ENCODE measurements at regions of chr6 and their contacts with region 1.

Region 1: DNA sequence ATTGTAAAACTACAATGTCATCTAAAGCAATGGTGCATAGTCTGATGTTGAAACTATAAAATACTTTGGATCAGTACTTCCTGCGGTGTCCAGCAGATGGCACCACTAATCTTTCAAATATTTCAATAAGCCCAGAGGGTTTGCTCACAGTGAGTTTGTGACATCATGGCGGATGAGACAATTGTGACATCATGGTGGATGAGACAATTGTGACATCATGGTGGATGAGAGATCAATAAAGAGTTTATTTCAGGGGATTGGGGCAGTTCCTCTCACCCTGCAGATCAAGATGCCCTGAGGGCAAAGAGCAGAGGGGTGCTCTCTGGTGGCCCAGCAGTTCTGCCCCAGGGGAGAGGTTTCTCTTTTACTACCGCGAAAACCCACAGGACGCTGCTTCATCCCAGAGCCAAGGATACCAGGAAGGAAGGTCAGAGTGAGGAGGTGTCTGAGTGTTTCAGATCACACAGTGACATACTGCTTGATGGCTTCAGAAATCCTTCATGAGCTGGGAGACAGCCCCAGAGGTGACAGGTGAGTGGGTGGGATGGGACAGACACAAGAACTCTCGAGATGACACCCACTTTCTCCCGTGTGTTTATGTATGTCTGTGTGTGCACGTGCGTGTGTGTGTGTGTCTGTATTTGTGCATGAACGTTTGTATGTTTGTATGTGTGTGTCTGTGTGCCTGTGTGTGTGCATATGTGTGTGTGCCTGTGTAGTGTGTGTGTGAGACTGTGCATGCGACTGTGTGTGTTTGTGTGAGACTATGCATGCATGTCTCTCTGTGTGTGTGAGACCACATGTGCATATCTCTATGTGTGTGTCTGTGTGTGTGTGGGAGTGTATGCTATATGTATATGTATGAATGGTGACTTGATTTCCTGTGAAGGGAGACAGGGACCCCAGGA is 7.3 kb upstream of the ULBP2 start:
- DNase-seq: peak; percentile 86
- ATAC-seq: peak; percentile 44
- H3K4me3 ChIP-seq: no peak overlapping the region
- H3K4me3 Mint-ChIP-seq: no peak overlapping the region
- H3K27ac ChIP-seq: no peak overlapping the region
- H3K27ac Mint-ChIP-seq: no peak overlapping the region
- H3K4me1 ChIP-seq: peaks cover 16 to 24% of the 10 kb centered on the region in 2 donors
- H3K4me1 Mint-ChIP-seq: peaks cover 19% of the 10 kb centered on the region
- H3K27me3 ChIP-seq: peaks cover 2 to 72% (median 64%) of the 10 kb centered on the region in 4 experiments
- H3K27me3 Mint-ChIP-seq: peaks cover 80% of the 10 kb centered on the region
- CTCF ChIP-seq: peak; percentile 84

Region 2: GRCh38 chr6:149834513-149835481 is 99.7 kb before region 1 on chr6:
- CTCF ChIA-PET with region 1: no interaction called
- POLR2A ChIA-PET with region 1: no interaction called
- intact Hi-C with region 1: loop called (anchors 2 kb)
- DNase-seq: peak; percentile 78
- ATAC-seq: peak; percentile 70
- H3K4me3 ChIP-seq: no peak overlapping the region
- H3K4me3 Mint-ChIP-seq: no peak overlapping the region
- H3K27ac ChIP-seq: no peak overlapping the region
- H3K27ac Mint-ChIP-seq: no peak overlapping the region
- H3K4me1 ChIP-seq: no peaks in the 10 kb centered on the region
- H3K4me1 Mint-ChIP-seq: no peaks in the 10 kb centered on the region
- H3K27me3 ChIP-seq: peaks cover 0 to 8% (median 0%) of the 10 kb centered on the region in 4 experiments
- H3K27me3 Mint-ChIP-seq: peaks cover 21% of the 10 kb centered on the region
- CTCF ChIP-seq: peak; percentile 94

Region 3: DNA sequence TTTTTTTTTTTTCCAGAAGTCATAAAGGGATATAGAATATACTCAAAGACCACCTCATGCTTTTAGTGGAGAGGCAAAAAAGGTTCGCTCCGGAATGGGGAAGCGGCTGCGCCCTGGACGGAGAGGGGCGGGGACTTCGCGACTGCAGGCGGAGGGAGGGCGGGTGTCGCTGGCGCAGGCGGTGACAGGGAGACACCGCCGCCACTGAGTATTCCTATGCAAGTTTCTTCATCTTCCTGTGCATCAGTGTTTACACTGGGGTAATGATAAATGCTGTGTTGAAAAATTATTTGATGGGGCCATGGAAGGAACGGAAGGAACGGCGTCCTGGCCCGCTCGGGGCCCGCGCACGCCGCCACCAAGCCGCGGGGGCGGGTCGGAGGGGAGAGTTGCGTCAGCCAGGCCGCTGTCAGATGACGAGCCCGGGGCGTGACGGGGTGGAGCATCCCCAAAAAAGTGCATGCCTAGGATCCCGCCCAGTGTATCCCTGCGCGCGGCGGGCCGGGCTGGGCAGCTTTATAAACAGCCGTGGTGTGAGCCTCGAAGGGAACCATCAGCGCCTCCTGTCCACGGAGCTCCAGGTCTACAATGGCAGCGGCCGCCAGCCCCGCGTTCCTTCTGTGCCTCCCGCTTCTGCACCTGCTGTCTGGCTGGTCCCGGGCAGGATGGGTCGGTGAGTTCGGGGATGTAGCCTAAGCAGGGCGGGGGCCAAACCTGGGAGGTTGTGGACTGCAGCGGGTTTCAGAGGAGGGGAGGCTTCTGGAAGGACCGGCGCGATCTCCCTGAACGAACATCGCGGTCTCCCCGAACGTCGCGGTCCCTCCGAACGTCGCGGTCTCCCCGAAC is 29.2 kb after region 1 on chr6 and contains the start of gene ULBP1:
- CTCF ChIA-PET with region 1: no interaction called
- POLR2A ChIA-PET with region 1: no interaction called
- intact Hi-C with region 1: loop called (anchors 2 kb)
- DNase-seq: peak; percentile 86
- ATAC-seq: peak; percentile 77
- H3K4me3 ChIP-seq: peak within 1 kb of the TSS; percentile 31 to 66 (median 53)
- H3K4me3 Mint-ChIP-seq: peak within 1 kb of the TSS; percentile 95
- H3K27ac ChIP-seq: no peak within 1 kb of the TSS
- H3K27ac Mint-ChIP-seq: peak within 1 kb of the TSS; percentile 67
- H3K4me1 ChIP-seq: peaks cover 28 to 30% of the 10 kb centered on the region in 2 donors
- H3K4me1 Mint-ChIP-seq: peaks cover 29% of the 10 kb centered on the region
- H3K27me3 ChIP-seq: peaks cover 0 to 79% (median 35%) of the 10 kb centered on the region in 4 experiments
- H3K27me3 Mint-ChIP-seq: peaks cover 86% of the 10 kb centered on the region
- CTCF ChIP-seq: no peak
- total RNA-seq, gene ULBP1: 0.12 and 0.19 TPM in 2 replicates

Region 4: DNA sequence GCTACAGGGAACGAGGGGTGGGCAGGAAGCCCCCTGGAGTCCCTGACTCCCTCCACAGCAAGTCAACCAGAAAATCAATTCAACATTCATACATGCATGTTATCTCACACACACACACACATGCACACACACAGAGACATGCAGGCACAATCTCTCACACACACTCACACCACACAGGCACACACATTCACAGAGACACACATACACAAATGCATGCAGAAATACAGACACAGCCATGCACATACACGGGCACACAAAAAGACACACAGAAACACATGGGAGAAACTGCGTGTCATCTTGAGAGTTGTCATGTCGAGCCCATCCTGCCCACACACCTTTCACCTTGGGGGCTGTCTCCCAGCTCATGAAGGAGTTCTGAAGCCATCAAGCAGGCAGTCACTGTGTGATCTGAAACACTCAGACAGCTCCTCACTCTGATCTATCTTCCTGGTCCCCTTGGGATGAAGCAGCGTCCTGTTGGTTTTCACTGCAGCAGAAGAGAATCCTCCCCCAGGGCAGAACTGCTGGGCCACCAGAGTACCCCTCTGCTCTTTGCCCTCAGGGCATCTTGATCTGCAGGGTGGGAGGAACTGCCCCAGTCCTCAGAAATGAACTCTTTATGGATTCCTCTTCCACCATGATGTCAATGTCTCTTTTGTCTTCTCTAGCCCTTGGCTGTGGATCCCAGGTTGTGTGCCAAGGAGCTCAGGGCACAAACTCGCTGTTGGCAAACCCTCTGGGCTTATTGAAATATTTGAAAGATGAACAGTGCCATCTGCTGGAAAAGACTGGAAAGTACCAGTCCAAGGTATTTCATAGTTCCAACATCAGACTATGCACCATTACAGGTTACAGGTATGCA is 82.1 kb after region 1 on chr6:
- CTCF ChIA-PET with region 1: interaction called, 49 read pairs
- POLR2A ChIA-PET with region 1: no interaction called
- intact Hi-C with region 1: loop called (anchors 1 kb)
- DNase-seq: peak; percentile 85
- ATAC-seq: peak; percentile 78
- H3K4me3 ChIP-seq: no peak overlapping the region
- H3K4me3 Mint-ChIP-seq: peak overlapping the region; percentile 4
- H3K27ac ChIP-seq: no peak overlapping the region
- H3K27ac Mint-ChIP-seq: no peak overlapping the region
- H3K4me1 ChIP-seq: peaks cover 12 to 13% of the 10 kb centered on the region in 2 donors
- H3K4me1 Mint-ChIP-seq: peaks cover 13% of the 10 kb centered on the region
- H3K27me3 ChIP-seq: peaks cover 0 to 51% (median 36%) of the 10 kb centered on the region in 4 experiments
- H3K27me3 Mint-ChIP-seq: peaks cover 66% of the 10 kb centered on the region
- CTCF ChIP-seq: peak; percentile 80

Region 5: GRCh38 chr6:150334790-150335783 is 400.6 kb after region 1 on chr6:
- CTCF ChIA-PET with region 1: no interaction called
- POLR2A ChIA-PET with region 1: no interaction called
- intact Hi-C with region 1: loop called (anchors 5 kb)
- DNase-seq: peak; percentile 66
- ATAC-seq: peak; percentile 45
- H3K4me3 ChIP-seq: no peak overlapping the region
- H3K4me3 Mint-ChIP-seq: no peak overlapping the region
- H3K27ac ChIP-seq: no peak overlapping the region
- H3K27ac Mint-ChIP-seq: no peak overlapping the region
- H3K4me1 ChIP-seq: no peaks in the 10 kb centered on the region
- H3K4me1 Mint-ChIP-seq: no peaks in the 10 kb centered on the region
- H3K27me3 ChIP-seq: no peaks in the 10 kb centered on the region
- H3K27me3 Mint-ChIP-seq: peaks cover 33% of the 10 kb centered on the region
- CTCF ChIP-seq: peak; percentile 88

Measured in B cell (primary cell).